CD4-positive, alpha-beta memory T cell (primary cell): ENCODE measurements at regions of chr1 and their contacts with region 1.

Region 1: GRCh38 chr1:180631766-180632325 is at the start of gene XPR1:
- DNase-seq: peak; percentile 93 to 98 (median 96)
- H3K4me3 ChIP-seq: peak within 1 kb of the TSS; percentile 74 to 94
- H3K4me3 Mint-ChIP-seq: peak within 1 kb of the TSS in 4 of 8 donors; percentile 82 to 92 (median 89)
- H3K27ac ChIP-seq: peak within 1 kb of the TSS; percentile 91
- H3K27ac Mint-ChIP-seq: peak within 1 kb of the TSS in 6 of 7 donors; percentile 75 to 95 (median 93)
- H3K4me1 ChIP-seq: peaks cover 33% of the 10 kb centered on the region
- H3K4me1 Mint-ChIP-seq: peaks cover 7 to 13% (median 9%) of the 10 kb centered on the region in 4 donors
- H3K27me3 ChIP-seq: no peaks in the 10 kb centered on the region
- H3K27me3 Mint-ChIP-seq: peaks cover 0 to 5% of the 10 kb centered on the region in 2 donors
- total RNA-seq, gene XPR1: 16.8 to 17.0 TPM

Region 2: DNA sequence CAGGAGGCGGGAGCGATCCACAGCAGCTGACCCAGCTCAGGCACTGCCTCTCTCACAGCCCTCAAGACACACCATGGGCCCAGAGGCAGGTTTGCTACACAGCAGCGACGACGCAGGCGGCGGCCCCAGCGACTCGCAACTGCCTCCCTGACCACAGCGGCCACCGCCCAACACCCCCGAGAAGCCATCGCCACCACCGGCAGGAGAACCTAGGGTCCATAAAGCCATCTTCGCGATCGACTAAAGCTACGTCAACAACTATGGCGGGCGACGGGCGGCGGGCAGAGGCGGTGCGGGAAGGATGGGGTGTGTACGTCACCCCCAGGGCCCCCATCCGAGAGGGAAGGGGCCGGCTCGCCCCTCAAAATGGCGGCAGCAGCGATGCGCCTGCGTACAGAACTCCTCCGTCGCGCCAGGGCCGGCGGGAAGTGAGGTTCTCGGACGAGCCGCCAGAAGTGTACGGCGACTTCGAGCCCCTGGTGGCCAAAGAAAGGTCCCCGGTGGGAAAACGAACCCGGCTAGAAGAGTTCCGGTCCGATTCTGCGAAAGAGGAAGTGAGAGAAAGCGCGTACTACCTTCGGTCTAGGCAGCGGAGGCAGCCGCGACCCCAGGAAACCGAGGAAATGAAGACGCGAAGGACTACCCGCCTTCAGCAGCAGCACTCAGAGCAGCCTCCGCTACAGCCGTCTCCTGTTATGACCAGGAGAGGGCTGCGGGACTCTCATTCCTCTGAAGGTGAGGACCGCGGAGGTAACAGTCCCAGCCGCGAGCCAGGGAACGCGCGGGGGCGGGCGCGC is 749.4 kb before region 1 on chr1 and contains the start of gene TOR1AIP1:
- CTCF ChIA-PET with region 1: no interaction called
- POLR2A ChIA-PET with region 1: no interaction called
- intact Hi-C with region 1: loop called (anchors 1 kb)
- DNase-seq: peak; percentile 98 to 99 (median 98)
- H3K4me3 ChIP-seq: peak within 1 kb of the TSS; percentile 80 to 94
- H3K4me3 Mint-ChIP-seq: peak within 1 kb of the TSS; percentile 94 to 99 (median 96)
- H3K27ac ChIP-seq: peak within 1 kb of the TSS; percentile 99
- H3K27ac Mint-ChIP-seq: peak within 1 kb of the TSS; percentile 99 to 100 (median 100)
- H3K4me1 ChIP-seq: peaks cover 53% of the 10 kb centered on the region
- H3K4me1 Mint-ChIP-seq: peaks cover 31 to 77% (median 53%) of the 10 kb centered on the region in 4 donors
- H3K27me3 ChIP-seq: no peaks in the 10 kb centered on the region
- H3K27me3 Mint-ChIP-seq: no peaks in the 10 kb centered on the region
- total RNA-seq, gene TOR1AIP1: 53.8 to 61.0 TPM

Region 3: GRCh38 chr1:180154325-180155181 is 477.3 kb before region 1 on chr1 and contains the start of gene QSOX1:
- CTCF ChIA-PET with region 1: no interaction called
- POLR2A ChIA-PET with region 1: no interaction called
- intact Hi-C with region 1: loop called (anchors 1 kb)
- DNase-seq: peak; percentile 88 to 91 (median 89)
- H3K4me3 ChIP-seq: peak within 1 kb of the TSS; percentile 87 to 94
- H3K4me3 Mint-ChIP-seq: peak within 1 kb of the TSS; percentile 89 to 94 (median 92)
- H3K27ac ChIP-seq: peak within 1 kb of the TSS; percentile 68
- H3K27ac Mint-ChIP-seq: peak within 1 kb of the TSS; percentile 85 to 94 (median 92)
- H3K4me1 ChIP-seq: peaks cover 27% of the 10 kb centered on the region
- H3K4me1 Mint-ChIP-seq: peaks cover 14 to 52% (median 34%) of the 10 kb centered on the region in 4 donors
- H3K27me3 ChIP-seq: no peaks in the 10 kb centered on the region
- H3K27me3 Mint-ChIP-seq: no peaks in the 10 kb centered on the region
- total RNA-seq, gene QSOX1: 19.1 to 25.1 TPM

Region 4: DNA sequence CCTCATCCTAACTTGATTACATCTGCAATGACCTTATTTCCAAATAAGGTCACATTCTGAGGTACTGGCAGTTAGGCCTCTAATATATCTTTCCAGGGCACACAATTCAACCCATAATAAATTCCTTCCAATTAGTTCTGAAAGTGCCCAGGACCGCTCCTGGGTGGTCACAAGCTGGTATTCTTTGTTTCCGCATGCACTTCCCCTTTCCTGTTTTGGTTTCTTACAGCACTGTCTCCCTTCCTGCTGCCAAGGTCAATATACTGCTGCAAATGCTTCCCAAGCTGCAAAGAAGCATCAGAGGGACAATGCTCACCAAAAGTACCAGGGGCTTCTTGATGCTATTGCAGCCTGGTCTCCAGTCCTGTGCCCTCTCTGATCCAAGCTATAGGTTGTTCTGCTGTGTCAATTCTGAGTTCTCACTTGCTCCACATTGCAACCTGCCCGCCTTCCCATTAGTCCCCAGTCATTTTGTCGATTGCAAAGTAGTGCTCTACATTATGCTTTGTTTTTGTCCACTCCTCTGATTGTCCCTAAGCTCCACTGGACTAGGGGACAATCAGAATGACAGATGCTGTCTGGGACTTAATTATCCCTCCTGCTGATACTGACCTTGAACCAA is 14.0 kb before region 1 on chr1:
- CTCF ChIA-PET with region 1: no interaction called
- POLR2A ChIA-PET with region 1: no interaction called
- intact Hi-C with region 1: no loop called
- DNase-seq: no peak
- H3K4me3 ChIP-seq: no peak overlapping the region
- H3K4me3 Mint-ChIP-seq: no peak overlapping the region
- H3K27ac ChIP-seq: no peak overlapping the region
- H3K27ac Mint-ChIP-seq: no peak overlapping the region
- H3K4me1 ChIP-seq: no peaks in the 10 kb centered on the region
- H3K4me1 Mint-ChIP-seq: peaks cover 0 to 3% (median 0%) of the 10 kb centered on the region in 4 donors
- H3K27me3 ChIP-seq: no peaks in the 10 kb centered on the region
- H3K27me3 Mint-ChIP-seq: no peaks in the 10 kb centered on the region

Region 5: DNA sequence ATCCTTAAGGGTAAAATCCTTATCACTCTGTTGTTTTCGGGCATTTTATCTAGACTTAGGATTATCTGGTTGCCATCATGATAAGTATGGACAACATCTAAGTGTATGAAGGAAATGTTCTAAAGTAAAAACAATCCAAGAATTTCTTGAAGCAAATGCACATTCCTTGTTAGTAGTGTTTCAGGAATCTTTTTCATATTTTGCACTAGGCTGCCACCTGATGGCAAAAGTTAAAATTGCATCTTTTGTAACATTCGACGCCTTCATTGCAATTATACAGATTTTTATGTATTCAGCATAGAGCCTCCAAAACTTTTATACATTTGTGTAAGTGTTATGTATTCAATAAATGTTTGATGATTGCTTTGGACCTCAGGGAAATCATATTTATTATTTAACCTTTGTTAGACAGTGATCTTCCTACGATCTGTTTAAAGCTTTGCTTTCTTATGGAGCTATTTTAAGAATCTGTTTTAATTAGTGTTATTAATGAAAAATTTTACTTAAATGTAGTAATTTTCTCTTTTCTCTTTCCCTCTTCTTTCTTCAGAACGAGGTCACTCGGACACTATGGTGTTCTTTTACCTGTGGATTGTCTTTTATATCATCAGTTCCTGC is 231.4 kb after region 1 on chr1:
- CTCF ChIA-PET with region 1: interaction called, 18 read pairs
- POLR2A ChIA-PET with region 1: no interaction called
- intact Hi-C with region 1: loop called (anchors 5 kb)
- DNase-seq: peak in 4 of 5 donors; percentile 31 to 44 (median 38)
- H3K4me3 ChIP-seq: no peak overlapping the region
- H3K4me3 Mint-ChIP-seq: no peak overlapping the region
- H3K27ac ChIP-seq: no peak overlapping the region
- H3K27ac Mint-ChIP-seq: no peak overlapping the region
- H3K4me1 ChIP-seq: no peaks in the 10 kb centered on the region
- H3K4me1 Mint-ChIP-seq: peaks cover 0 to 4% (median 0%) of the 10 kb centered on the region in 4 donors
- H3K27me3 ChIP-seq: no peaks in the 10 kb centered on the region
- H3K27me3 Mint-ChIP-seq: no peaks in the 10 kb centered on the region

Region 6: DNA sequence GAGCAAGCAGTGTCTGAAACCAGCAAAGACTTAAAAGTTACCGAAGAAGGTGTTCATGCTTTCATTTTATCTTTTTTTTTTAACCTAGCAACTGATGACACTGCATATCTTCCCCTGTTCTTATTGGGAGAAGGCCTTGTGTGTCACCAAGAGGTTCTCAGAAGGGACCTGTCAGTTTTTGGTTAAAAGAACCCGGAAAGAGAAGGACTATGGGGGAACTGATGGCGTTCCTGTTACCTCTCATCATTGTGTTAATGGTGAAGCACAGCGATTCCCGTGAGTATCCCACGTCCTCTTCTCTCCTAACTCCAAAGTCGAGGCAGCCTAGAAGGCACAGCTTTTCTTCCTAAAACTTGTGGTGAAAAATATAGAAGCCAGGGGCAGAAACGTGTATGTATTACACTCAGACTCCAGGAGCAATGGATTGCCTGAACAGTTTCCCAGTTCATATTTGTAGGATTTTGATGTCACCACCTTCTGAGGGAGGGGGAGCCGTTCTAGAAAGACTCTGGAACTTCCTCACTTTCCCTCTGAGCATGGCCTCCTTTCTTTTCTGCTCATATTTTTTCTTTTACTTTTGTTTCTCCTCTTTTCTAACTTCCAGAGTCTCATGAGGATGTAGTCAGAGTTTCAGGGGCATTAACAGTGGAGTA is 402.1 kb after region 1 on chr1 and contains the start of gene MR1:
- CTCF ChIA-PET with region 1: no interaction called
- POLR2A ChIA-PET with region 1: interaction called, 3 read pairs
- intact Hi-C with region 1: loop called (anchors 1 kb)
- DNase-seq: peak; percentile 72 to 91 (median 87)
- H3K4me3 ChIP-seq: peak within 1 kb of the TSS; percentile 63 to 72
- H3K4me3 Mint-ChIP-seq: peak within 1 kb of the TSS; percentile 93 to 99 (median 98)
- H3K27ac ChIP-seq: peak within 1 kb of the TSS; percentile 92
- H3K27ac Mint-ChIP-seq: peak within 1 kb of the TSS; percentile 95 to 100 (median 99)
- H3K4me1 ChIP-seq: peaks cover 56% of the 10 kb centered on the region
- H3K4me1 Mint-ChIP-seq: peaks cover 47 to 64% (median 54%) of the 10 kb centered on the region in 4 donors
- H3K27me3 ChIP-seq: no peaks in the 10 kb centered on the region
- H3K27me3 Mint-ChIP-seq: no peaks in the 10 kb centered on the region
- total RNA-seq, gene MR1: 31.8 to 33.2 TPM

Region 7: GRCh38 chr1:181397845-181398244 is 766.0 kb after region 1 on chr1:
- CTCF ChIA-PET with region 1: no interaction called
- POLR2A ChIA-PET with region 1: no interaction called
- intact Hi-C with region 1: loop called (anchors 10 kb)
- DNase-seq: peak; percentile 41 to 56 (median 50)
- H3K4me3 ChIP-seq: peak overlapping the region; percentile 13 to 25
- H3K4me3 Mint-ChIP-seq: peak overlapping the region; percentile 65 to 86 (median 74)
- H3K27ac ChIP-seq: peak overlapping the region; percentile 37
- H3K27ac Mint-ChIP-seq: peak overlapping the region in 5 of 7 donors; percentile 78 to 97 (median 95)
- H3K4me1 ChIP-seq: peaks cover 64% of the 10 kb centered on the region
- H3K4me1 Mint-ChIP-seq: peaks cover 9 to 35% (median 29%) of the 10 kb centered on the region in 4 donors
- H3K27me3 ChIP-seq: no peaks in the 10 kb centered on the region
- H3K27me3 Mint-ChIP-seq: no peaks in the 10 kb centered on the region